ENCODE measurements at regions of chr5 and their contacts with region 1.

Region 1: GRCh38 chr5:5270958-5271605 is 131.0 kb downstream of the ADAMTS16 start:
- DNase-seq: peak; percentile 91
- H3K4me3 ChIP-seq: peak overlapping the region in 2 of 3 experiments; percentile 7 to 28
- H3K27ac ChIP-seq: peak overlapping the region; percentile 51
- H3K4me1 ChIP-seq: peaks cover 11% of the 10 kb centered on the region
- H3K27me3 ChIP-seq: no peaks in the 10 kb centered on the region
- CTCF ChIP-seq: peak in 1 of 2 donors; percentile 19

Region 2: DNA sequence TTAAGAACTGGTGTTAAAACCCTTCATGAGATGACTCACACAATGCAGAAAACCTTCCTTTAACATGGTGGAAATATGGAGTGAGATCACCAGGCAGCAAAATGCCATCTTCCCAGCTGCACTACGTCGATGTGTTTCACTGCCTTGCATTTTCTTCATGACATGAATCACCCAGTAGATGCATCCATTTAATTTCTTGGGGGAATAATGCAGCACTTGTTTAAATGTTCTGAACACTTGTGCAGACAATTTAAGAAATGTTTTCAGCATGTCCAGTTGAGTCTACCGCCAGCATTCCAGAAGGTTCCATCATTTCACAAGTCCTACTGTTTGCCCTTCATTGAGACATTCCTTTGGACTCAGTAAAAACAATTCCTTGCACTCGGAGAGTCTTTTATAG is 49.4 kb before region 1 on chr5:
- CTCF ChIA-PET with region 1: no interaction called
- dilution Hi-C with region 1: loop called (anchors 5 kb)
- in situ Hi-C with region 1: no loop called
- intact Hi-C with region 1: no loop called
- DNase-seq: no peak
- H3K4me3 ChIP-seq: no peak overlapping the region
- H3K27ac ChIP-seq: no peak overlapping the region
- H3K4me1 ChIP-seq: no peaks in the 10 kb centered on the region
- H3K27me3 ChIP-seq: no peaks in the 10 kb centered on the region
- CTCF ChIP-seq: no peak

Region 3: GRCh38 chr5:5340206-5340729 is 69.2 kb after region 1 on chr5:
- CTCF ChIA-PET with region 1: no interaction called
- dilution Hi-C with region 1: no loop called
- in situ Hi-C with region 1: no loop called
- intact Hi-C with region 1: loop called (anchors 5 kb)
- DNase-seq: peak; percentile 88
- H3K4me3 ChIP-seq: no peak overlapping the region
- H3K27ac ChIP-seq: no peak overlapping the region
- H3K4me1 ChIP-seq: peaks cover 31% of the 10 kb centered on the region
- H3K27me3 ChIP-seq: no peaks in the 10 kb centered on the region
- CTCF ChIP-seq: peak; percentile 75 to 80

Measured in mammary epithelial cell (primary cell).